Breast epithelium (tissue), 4 donors: ENCODE measurements at regions of chr5 and their contacts with region 1.

Region 1: GRCh38 chr5:149367249-149367971 is 9.6 kb downstream of the PCYOX1L start:
- DNase-seq: no peak
- H3K4me3 ChIP-seq: no peak overlapping the region
- H3K27ac ChIP-seq: no peak overlapping the region
- H3K4me1 ChIP-seq: no peaks in the 10 kb centered on the region
- H3K27me3 ChIP-seq: no peaks in the 10 kb centered on the region
- CTCF ChIP-seq: peak; percentile 51 to 66 (median 63)
- POLR2A ChIP-seq: no peak

Region 2: GRCh38 chr5:149422366-149423048 is 55.1 kb after region 1 on chr5:
- intact Hi-C with region 1: loop called (anchors 10 kb)
- DNase-seq: no peak
- H3K4me3 ChIP-seq: peak overlapping the region in 1 of 3 donors; percentile 39
- H3K27ac ChIP-seq: peak overlapping the region; percentile 63 to 89
- H3K4me1 ChIP-seq: peaks cover 0 to 21% of the 10 kb centered on the region in 2 donors
- H3K27me3 ChIP-seq: no peaks in the 10 kb centered on the region
- CTCF ChIP-seq: no peak
- POLR2A ChIP-seq: no peak

Region 3: DNA sequence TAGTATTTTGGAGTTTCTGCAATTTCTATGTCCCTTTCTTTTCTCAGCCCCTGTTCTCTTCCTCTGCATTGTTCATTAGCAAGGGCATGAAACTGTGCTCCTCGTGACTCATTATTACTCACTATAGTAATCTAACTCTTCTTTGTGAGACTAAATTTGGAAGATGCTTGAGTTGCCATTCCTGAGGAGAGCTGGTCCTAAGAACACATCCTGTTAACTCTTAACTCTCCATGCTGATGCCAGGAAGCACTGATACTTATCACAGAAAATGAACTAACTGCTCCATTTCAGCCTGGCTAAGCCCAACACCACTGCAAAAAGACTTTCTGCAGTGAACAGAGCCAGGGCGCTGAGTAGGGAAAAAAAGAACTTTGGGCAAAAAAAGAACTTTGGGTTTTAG is 194.4 kb after region 1 on chr5:
- intact Hi-C with region 1: loop called (anchors 10 kb)
- DNase-seq: no peak
- H3K4me3 ChIP-seq: no peak overlapping the region
- H3K27ac ChIP-seq: peak overlapping the region; percentile 81 to 82
- H3K4me1 ChIP-seq: peaks cover 3 to 8% of the 10 kb centered on the region in 2 donors
- H3K27me3 ChIP-seq: no peaks in the 10 kb centered on the region
- CTCF ChIP-seq: no peak
- POLR2A ChIP-seq: no peak